ENCODE measurements at regions of chr6 and their contacts with region 1.

Region 1: DNA sequence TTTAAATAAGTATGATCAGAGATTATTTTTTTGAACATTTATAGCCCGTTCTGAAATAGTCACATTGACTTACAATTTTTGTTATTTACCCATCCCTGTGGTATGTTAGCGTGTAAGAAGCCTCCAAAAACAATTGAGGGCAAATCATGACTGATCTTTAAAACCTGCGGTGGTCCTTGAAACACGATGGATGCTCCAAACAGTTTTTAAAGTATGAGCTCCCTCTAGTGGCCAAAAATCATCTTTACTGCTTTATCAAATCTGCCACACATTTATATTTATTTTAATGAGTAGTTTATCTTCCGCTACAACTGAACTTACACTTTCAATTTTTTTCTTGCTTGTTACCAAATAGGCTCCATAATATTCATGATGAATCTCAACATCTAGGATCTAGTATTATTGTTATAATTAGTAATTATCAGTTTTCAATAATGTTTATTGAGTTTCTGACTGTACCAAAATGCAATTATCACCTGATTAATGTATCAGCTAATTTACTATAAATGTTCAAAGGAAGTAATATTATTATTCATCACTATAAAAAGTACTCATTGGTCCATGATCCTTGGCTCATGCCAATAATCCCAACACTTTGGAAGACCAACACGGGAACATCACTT is 52.2 kb downstream of the MARCKS start:
- DNase-seq: no peak
- H3K4me3 ChIP-seq: no peak overlapping the region
- H3K27ac ChIP-seq: no peak overlapping the region
- H3K4me1 ChIP-seq: no peaks in the 10 kb centered on the region
- H3K27me3 ChIP-seq: no peaks in the 10 kb centered on the region
- CTCF ChIP-seq: peak; percentile 54 to 85 (median 64)
- POLR2A ChIP-seq: no peak

Region 2: DNA sequence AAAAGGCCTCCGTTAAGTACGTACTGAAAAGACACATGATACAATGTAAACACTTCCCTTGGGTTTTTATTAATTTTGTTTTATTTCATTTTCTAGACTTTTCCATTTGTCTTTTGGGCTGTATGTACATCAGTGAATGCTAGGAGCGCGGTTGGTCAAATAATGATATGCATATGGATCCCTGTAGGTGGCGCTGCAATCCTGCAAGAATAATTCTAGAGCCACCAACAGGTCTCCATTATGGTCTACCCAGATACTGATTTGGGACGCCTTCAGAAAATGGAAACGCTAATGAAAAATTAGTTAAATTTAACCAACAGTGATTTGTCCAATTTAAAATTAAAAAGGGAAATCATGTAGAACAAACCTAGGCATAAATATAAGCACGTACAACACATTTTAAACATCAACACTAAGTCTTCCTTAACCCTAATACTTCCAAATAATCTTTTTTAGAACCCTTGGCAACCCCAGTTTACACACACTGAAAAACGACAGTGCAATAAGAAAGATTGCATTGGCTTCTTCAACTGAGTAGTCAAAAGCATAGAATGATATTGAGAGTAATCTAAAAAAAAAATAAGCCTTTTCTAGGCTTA is 1128.7 kb before region 1 on chr6:
- intact Hi-C with region 1: loop called in 1 of 2 experiments (anchors 5 kb)
- DNase-seq: peak; percentile 53 to 87 (median 67)
- H3K4me3 ChIP-seq: no peak overlapping the region
- H3K27ac ChIP-seq: no peak overlapping the region
- H3K4me1 ChIP-seq: no peaks in the 10 kb centered on the region
- H3K27me3 ChIP-seq: no peaks in the 10 kb centered on the region
- CTCF ChIP-seq: peak; percentile 75 to 86 (median 80)
- POLR2A ChIP-seq: no peak

Region 3: DNA sequence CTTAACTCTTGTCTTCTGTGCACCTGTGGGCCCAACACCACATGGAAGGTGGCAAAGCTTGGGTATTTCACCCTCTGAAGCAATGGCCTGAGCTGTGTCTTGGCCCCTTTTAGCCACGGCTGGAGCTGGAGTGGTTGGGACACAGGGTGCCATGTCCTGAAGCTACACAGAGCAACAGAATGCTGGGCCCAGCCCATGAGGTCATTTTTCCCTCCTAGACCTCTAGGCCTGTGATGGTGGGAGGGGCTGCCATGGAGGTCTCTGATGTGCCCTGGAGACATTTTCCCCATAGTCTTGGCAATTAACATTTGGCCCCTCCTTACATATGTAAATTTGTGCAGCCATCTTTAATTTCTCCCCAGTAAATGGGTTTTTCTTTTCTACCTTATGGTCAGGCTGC is 941.4 kb before region 1 on chr6:
- intact Hi-C with region 1: no loop called
- DNase-seq: no peak
- H3K4me3 ChIP-seq: no peak overlapping the region
- H3K27ac ChIP-seq: no peak overlapping the region
- H3K4me1 ChIP-seq: no peaks in the 10 kb centered on the region
- H3K27me3 ChIP-seq: no peaks in the 10 kb centered on the region
- CTCF ChIP-seq: no peak
- POLR2A ChIP-seq: no peak

Region 4: GRCh38 chr6:113208726-113209125 is 700.6 kb before region 1 on chr6:
- intact Hi-C with region 1: no loop called
- DNase-seq: no peak
- H3K4me3 ChIP-seq: no peak overlapping the region
- H3K27ac ChIP-seq: no peak overlapping the region
- H3K4me1 ChIP-seq: no peaks in the 10 kb centered on the region
- H3K27me3 ChIP-seq: no peaks in the 10 kb centered on the region
- CTCF ChIP-seq: no peak
- POLR2A ChIP-seq: no peak

Region 5: DNA sequence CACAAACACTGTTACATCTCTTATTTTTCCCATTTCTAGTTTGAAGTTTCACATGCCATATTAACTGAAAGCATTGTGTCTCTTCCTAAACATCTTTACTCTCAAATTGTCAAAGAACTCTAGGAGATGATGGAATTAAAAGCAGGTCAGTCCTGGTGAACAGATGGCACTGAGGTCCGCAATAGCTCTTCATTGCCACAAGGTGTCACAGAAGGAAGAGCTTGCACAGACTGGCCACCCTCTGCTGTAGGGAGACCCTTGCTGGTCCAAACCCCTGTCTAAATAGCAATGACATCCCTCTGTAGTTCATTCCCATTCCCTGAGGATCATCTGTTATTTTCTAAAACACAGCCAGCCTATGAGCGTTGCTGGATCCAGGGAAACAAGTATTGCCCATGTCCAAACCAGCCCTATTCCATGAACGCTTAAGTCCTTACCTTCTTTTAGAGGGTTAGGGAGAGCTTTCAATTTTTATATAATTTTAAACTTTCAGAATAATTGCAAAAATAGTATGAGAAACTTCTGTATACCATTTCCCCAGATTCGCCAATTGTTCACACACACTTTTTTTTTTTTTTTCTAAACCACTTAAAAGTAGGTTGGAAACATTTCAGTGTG is 71.7 kb after region 1 on chr6:
- intact Hi-C with region 1: no loop called
- DNase-seq: peak in 1 of 7 donors; percentile 10
- H3K4me3 ChIP-seq: no peak overlapping the region
- H3K27ac ChIP-seq: no peak overlapping the region
- H3K4me1 ChIP-seq: no peaks in the 10 kb centered on the region
- H3K27me3 ChIP-seq: no peaks in the 10 kb centered on the region
- CTCF ChIP-seq: peak in 5 of 6 experiments; percentile 9 to 38 (median 25)
- POLR2A ChIP-seq: no peak

Measured in adrenal gland (tissue), 19 donors.